GM12878 (cell line): ENCODE measurements at regions of chr5 and their contacts with region 1.

Region 1: GRCh38 chr5:35436410-35437057 is 181.1 kb upstream of the SPEF2 start:
- DNase-seq: no peak
- ATAC-seq: peak; percentile 86
- H3K4me3 ChIP-seq: no peak overlapping the region
- H3K27ac ChIP-seq: no peak overlapping the region
- H3K4me1 ChIP-seq: no peaks in the 10 kb centered on the region
- H3K27me3 ChIP-seq: no peaks in the 10 kb centered on the region
- CTCF ChIP-seq: peak; percentile 42 to 50 (median 45); a peak in 4 of 6 replicates
- EP300 ChIP-seq: no peak
- POLR2A ChIP-seq: no peak
- RAD21 ChIP-seq: peak; percentile 41

Region 2: GRCh38 chr5:35182541-35183535 is 253.7 kb before region 1 on chr5:
- CTCF ChIA-PET with region 1: interaction called, 6 read pairs
- POLR2A ChIA-PET with region 1: no interaction called
- RAD21 ChIA-PET with region 1: interaction called, 5 read pairs
- SMC1A ChIA-PET with region 1: interaction called, 16 read pairs
- in situ Hi-C with region 1: no loop called
- intact Hi-C with region 1: no loop called
- DNase-seq: peak; percentile 27
- ATAC-seq: peak; percentile 91
- H3K4me3 ChIP-seq: no peak overlapping the region
- H3K27ac ChIP-seq: no peak overlapping the region
- H3K4me1 ChIP-seq: no peaks in the 10 kb centered on the region
- H3K27me3 ChIP-seq: no peaks in the 10 kb centered on the region
- CTCF ChIP-seq: peak; percentile 59 to 69 (median 63)
- EP300 ChIP-seq: no peak
- POLR2A ChIP-seq: no peak
- RAD21 ChIP-seq: peak; percentile 62

Region 3: DNA sequence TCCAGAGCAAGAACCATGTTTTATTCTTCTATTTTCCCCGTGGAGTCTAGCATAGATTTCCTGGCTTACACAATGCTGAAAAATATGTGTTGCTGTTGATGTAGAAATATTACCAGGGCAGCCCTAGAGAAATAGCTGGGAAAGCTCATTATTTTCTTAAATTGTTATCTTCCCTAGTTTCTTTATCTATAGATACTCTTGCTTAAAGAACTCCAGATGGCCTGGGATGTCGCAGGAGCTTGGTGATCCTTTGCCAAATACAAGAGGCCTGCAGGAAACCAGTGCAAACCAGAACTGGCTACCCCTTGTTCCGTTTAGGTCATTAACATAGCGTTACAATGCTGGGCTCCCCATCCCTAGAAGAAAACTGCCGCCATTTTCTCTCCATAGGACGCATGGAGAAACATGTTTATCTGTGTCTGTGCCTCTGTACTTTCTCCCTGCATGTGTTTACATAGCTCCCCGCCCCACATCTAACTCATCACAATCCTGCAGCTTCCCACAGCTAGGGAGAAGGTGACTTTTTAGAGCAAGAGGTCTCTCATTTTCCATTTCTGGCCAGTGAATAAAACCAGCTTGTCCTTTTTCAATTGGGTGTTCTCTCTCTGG is 212.6 kb before region 1 on chr5:
- CTCF ChIA-PET with region 1: interaction called, 112 read pairs
- POLR2A ChIA-PET with region 1: no interaction called
- RAD21 ChIA-PET with region 1: interaction called, 83 read pairs
- SMC1A ChIA-PET with region 1: interaction called, 90 read pairs
- in situ Hi-C with region 1: no loop called
- intact Hi-C with region 1: loop called (anchors 1 kb)
- DNase-seq: no peak
- ATAC-seq: no peak
- H3K4me3 ChIP-seq: no peak overlapping the region
- H3K27ac ChIP-seq: no peak overlapping the region
- H3K4me1 ChIP-seq: no peaks in the 10 kb centered on the region
- H3K27me3 ChIP-seq: no peaks in the 10 kb centered on the region; a peak in 2 of 4 replicates
- CTCF ChIP-seq: no peak
- EP300 ChIP-seq: no peak
- POLR2A ChIP-seq: no peak
- RAD21 ChIP-seq: no peak

Region 4: DNA sequence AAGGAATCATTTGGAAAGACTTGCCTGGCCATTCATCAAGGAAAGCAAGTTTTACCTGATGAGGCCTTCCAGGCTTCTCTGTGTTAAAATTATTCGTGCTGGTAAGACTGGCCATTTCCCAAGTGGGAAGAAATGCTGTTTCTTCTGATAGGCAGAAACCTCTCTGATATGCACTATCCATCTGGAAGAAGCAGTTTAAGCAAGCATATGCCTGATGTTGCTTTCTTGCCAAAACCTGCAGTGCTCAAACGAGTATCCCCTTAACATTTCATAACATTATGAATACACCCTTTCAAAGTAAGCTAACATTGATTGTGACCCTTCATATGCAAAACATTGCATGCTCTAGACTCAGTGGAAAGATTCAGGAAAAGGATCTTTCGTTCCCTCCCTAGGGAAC is 170.3 kb before region 1 on chr5:
- CTCF ChIA-PET with region 1: interaction called, 3 read pairs
- POLR2A ChIA-PET with region 1: interaction called, 3 read pairs
- RAD21 ChIA-PET with region 1: interaction called, 12 read pairs
- SMC1A ChIA-PET with region 1: interaction called, 7 read pairs
- in situ Hi-C with region 1: no loop called
- intact Hi-C with region 1: no loop called
- DNase-seq: no peak
- ATAC-seq: no peak
- H3K4me3 ChIP-seq: no peak overlapping the region
- H3K27ac ChIP-seq: no peak overlapping the region
- H3K4me1 ChIP-seq: no peaks in the 10 kb centered on the region
- H3K27me3 ChIP-seq: no peaks in the 10 kb centered on the region
- CTCF ChIP-seq: no peak
- EP300 ChIP-seq: no peak
- POLR2A ChIP-seq: no peak
- RAD21 ChIP-seq: no peak

Region 5: GRCh38 chr5:35324679-35325078 is 111.9 kb before region 1 on chr5:
- CTCF ChIA-PET with region 1: interaction called, 10 read pairs
- POLR2A ChIA-PET with region 1: no interaction called
- RAD21 ChIA-PET with region 1: interaction called, 15 read pairs
- SMC1A ChIA-PET with region 1: interaction called, 20 read pairs
- in situ Hi-C with region 1: no loop called
- intact Hi-C with region 1: no loop called
- DNase-seq: no peak
- ATAC-seq: no peak
- H3K4me3 ChIP-seq: no peak overlapping the region
- H3K27ac ChIP-seq: no peak overlapping the region
- H3K4me1 ChIP-seq: peaks cover 7% of the 10 kb centered on the region
- H3K27me3 ChIP-seq: no peaks in the 10 kb centered on the region
- CTCF ChIP-seq: no peak
- EP300 ChIP-seq: no peak
- POLR2A ChIP-seq: no peak
- RAD21 ChIP-seq: no peak

Region 6: GRCh38 chr5:35416217-35416988 is 20.1 kb before region 1 on chr5:
- CTCF ChIA-PET with region 1: interaction called, 10 read pairs
- POLR2A ChIA-PET with region 1: interaction called, 3 read pairs
- RAD21 ChIA-PET with region 1: no interaction called
- SMC1A ChIA-PET with region 1: interaction called, 55 read pairs
- in situ Hi-C with region 1: no loop called
- intact Hi-C with region 1: no loop called
- DNase-seq: no peak
- ATAC-seq: no peak
- H3K4me3 ChIP-seq: no peak overlapping the region
- H3K27ac ChIP-seq: no peak overlapping the region
- H3K4me1 ChIP-seq: no peaks in the 10 kb centered on the region
- H3K27me3 ChIP-seq: no peaks in the 10 kb centered on the region
- CTCF ChIP-seq: no peak
- EP300 ChIP-seq: no peak
- POLR2A ChIP-seq: no peak
- RAD21 ChIP-seq: no peak